ENCODE measurements at regions of chr18 and their contacts with region 1.

Region 1: DNA sequence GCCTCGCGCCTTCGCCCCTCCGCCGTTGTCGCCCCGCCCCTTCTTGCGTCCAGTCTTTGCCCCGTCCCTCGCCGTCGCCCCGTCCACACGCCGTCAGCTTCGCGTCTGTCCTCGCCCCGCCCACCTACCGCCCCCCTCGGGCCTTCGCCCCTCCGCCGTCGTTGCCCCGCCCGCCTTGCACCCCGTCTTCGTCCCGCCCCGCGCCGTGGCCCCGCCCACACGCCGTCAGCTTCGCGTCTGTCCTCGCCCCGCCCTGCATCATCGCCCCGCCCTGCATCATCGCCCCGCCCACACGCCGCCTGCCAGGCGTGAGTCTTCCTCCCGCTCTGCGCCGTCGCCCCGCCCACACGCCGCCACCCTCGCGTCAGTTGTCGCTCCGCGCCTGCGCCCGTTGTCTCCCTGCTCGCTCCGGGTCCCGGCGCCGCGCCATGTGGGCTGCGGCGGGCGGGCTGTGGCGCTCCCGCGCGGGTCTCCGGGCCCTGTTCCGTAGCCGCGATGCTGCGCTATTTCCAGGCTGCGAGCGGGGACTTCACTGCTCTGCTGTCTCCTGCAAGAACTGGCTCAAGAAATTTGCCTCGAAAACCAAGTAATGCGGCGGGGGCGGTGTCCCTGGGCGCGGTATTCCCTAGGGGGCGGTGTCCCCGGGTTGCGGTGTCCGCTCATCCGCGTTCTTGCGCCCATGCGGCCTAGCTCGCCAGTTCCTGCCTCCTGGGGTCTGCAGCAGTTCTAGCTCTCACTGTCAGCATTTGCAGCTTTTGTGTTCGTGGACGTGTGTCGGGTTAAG is at the start of gene RBFA:
- DNase-seq: peak; percentile 99 to 100 (median 99)
- H3K4me3 ChIP-seq: peak within 1 kb of the TSS; percentile 47 to 87 (median 62)
- H3K27ac ChIP-seq: peak within 1 kb of the TSS; percentile 53 to 92 (median 73)
- H3K4me1 ChIP-seq: peaks cover 11 to 25% of the 10 kb centered on the region in 2 donors
- H3K27me3 ChIP-seq: no peaks in the 10 kb centered on the region
- CTCF ChIP-seq: peak in 5 of 6 experiments; percentile 50 to 67 (median 52)
- POLR2A ChIP-seq: peak; percentile 62 to 68
- total RNA-seq, gene RBFA: 25.0 to 45.1 (median 32.5) TPM

Region 2: DNA sequence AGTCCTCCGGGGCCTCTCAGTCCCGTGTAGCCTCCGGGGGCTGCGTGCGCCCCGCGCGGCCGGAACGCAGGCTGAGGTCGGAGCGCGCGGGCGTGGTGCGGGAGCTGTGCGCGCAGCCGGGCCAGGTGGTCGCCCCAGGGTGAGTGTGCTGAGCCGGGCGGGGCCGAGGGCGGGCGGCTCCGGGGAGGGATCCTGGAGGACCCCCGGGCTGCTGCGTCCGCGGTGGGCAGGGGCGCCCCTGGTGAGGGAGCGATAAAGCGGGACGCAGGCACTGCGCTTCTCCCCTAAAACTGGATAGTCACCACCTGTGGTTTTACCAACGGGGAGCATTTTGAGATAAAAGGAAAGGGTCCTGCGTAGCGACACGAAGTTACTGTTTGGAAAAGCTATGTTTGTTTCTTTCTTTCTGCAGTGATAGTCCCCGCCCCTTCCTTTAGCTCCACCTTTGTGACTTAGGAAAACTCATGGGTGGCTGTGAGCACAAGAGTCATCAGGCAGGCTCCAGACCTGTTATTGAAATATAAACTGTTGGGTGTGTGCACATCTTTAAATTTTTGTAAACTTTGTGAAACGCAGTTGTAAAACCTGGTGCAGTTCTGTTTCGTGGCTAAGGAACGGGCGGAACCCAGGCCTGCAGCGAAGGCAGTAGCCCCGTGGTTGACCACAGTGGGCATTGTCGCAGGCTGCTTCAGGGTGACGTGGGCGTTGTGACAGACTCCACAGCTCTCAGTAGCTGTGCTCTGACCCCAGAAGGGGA is 354.0 kb before region 1 on chr18:
- intact Hi-C with region 1: loop called in 1 of 2 experiments (anchors 10 kb)
- DNase-seq: peak; percentile 34 to 75 (median 55)
- H3K4me3 ChIP-seq: peak overlapping the region; percentile 54 to 87 (median 74)
- H3K27ac ChIP-seq: peak overlapping the region in 4 of 5 donors; percentile 96 to 100 (median 98)
- H3K4me1 ChIP-seq: peaks cover 18 to 30% of the 10 kb centered on the region in 2 donors
- H3K27me3 ChIP-seq: no peaks in the 10 kb centered on the region
- CTCF ChIP-seq: no peak
- POLR2A ChIP-seq: peak in 1 of 2 donors; percentile 14

Region 3: GRCh38 chr18:79786786-79787526 is 247.3 kb before region 1 on chr18:
- intact Hi-C with region 1: no loop called
- DNase-seq: no peak
- H3K4me3 ChIP-seq: no peak overlapping the region
- H3K27ac ChIP-seq: no peak overlapping the region
- H3K4me1 ChIP-seq: no peaks in the 10 kb centered on the region
- H3K27me3 ChIP-seq: peaks cover 34% of the 10 kb centered on the region
- CTCF ChIP-seq: no peak
- POLR2A ChIP-seq: no peak

Region 4: GRCh38 chr18:79848579-79849327 is 185.5 kb before region 1 on chr18:
- intact Hi-C with region 1: no loop called
- DNase-seq: peak in 2 of 7 donors; percentile 10 to 17
- H3K4me3 ChIP-seq: no peak overlapping the region
- H3K27ac ChIP-seq: no peak overlapping the region
- H3K4me1 ChIP-seq: no peaks in the 10 kb centered on the region
- H3K27me3 ChIP-seq: no peaks in the 10 kb centered on the region
- CTCF ChIP-seq: no peak
- POLR2A ChIP-seq: no peak

Region 5: GRCh38 chr18:79988451-79989194 is 45.6 kb before region 1 on chr18 and contains the start of gene TXNL4A:
- intact Hi-C with region 1: loop called in 1 of 2 experiments (anchors 5 kb)
- DNase-seq: peak; percentile 84 to 93 (median 86)
- H3K4me3 ChIP-seq: peak within 1 kb of the TSS; percentile 71 to 94 (median 84)
- H3K27ac ChIP-seq: peak within 1 kb of the TSS; percentile 94 to 99 (median 99)
- H3K4me1 ChIP-seq: peaks cover 9 to 31% of the 10 kb centered on the region in 2 donors
- H3K27me3 ChIP-seq: no peaks in the 10 kb centered on the region
- CTCF ChIP-seq: no peak
- POLR2A ChIP-seq: peak; percentile 80 to 90
- total RNA-seq, gene TXNL4A: 26.5 to 148 (median 84.3) TPM

Region 6: DNA sequence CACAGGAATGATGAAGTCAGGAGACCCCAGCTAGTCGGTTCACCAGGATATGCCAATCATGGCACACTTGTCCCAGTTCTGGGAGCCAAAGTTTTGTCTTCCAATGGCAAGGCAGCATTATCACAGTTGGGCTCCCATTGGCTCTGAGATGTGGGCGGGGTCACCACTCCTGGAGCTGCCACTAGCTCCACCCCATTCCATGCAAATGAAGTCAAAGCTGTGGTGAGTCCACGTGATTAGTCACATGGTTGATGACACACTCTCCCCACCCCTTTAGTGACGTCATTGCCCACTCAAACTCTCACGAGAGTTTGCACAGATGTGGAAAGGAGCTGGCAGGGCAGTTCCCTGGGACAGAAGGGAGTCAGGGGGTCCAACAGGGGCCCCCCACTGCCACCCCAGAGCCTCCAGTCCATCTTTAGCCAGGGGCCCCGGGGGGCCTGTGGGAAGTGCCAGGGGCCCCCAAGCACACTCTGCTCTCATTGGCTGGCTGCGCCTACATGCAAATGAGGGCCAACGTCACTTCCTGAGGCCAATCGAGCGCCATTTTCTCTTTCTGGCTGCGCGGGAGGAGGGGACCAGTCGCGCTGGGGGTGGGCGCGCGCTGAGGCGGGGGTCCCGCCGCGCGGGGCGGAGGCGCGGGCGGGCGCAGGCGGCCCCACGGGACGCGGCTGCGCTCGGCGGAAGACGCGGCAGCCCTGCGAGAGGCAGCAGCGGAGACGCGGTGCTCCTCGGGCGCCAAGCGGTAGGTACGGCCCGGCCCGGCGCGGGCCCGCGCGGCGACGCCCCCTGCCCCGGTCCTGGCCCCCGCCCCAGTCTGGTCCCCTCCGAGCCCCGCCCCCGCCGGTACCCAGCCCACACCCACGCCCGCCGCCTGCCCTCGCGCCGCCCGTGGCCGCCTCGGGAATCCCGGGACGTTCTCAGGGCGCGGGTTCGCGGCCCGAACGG is 74.7 kb after region 1 on chr18 and contains the start of gene ADNP2:
- intact Hi-C with region 1: loop called in 1 of 2 experiments (anchors 5 kb)
- DNase-seq: peak; percentile 82 to 96 (median 91)
- H3K4me3 ChIP-seq: peak within 1 kb of the TSS in 3 of 4 donors; percentile 34 to 97 (median 58)
- H3K27ac ChIP-seq: peak within 1 kb of the TSS in 4 of 5 donors; percentile 69 to 99 (median 92)
- H3K4me1 ChIP-seq: peaks cover 20 to 37% of the 10 kb centered on the region in 2 donors
- H3K27me3 ChIP-seq: no peaks in the 10 kb centered on the region
- CTCF ChIP-seq: no peak
- POLR2A ChIP-seq: peak; percentile 44 to 49
- total RNA-seq, gene ADNP2: 8.1 to 18.3 (median 13.9) TPM

Measured in adrenal gland (tissue), 19 donors.